ENCODE measurements at regions of chr2 and their contacts with region 1.

Region 1: DNA sequence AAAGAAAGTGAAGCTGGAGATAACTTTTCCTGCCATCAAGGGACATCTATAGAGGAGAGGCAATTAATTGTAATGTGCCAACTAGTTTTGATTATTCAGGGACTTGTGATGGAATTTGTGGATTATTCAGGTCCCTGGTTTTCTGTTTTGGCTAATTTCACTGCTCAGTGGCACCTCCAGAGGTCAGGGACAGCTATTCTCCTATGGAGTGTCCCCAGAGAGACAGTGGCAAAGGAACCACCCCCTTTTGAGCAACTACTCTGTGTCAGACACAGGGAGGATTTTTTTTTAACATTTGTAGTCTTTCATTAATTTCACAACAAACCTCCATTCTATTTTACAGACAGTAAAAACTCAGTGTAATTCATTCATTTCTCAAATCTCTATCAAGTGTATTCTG is 206.0 kb upstream of the SPRED2 start:
- H3K4me3 ChIP-seq: no peak overlapping the region
- H3K27ac ChIP-seq: no peak overlapping the region
- H3K4me1 ChIP-seq: peaks cover 23% of the 10 kb centered on the region
- CTCF ChIP-seq: no peak

Region 2: DNA sequence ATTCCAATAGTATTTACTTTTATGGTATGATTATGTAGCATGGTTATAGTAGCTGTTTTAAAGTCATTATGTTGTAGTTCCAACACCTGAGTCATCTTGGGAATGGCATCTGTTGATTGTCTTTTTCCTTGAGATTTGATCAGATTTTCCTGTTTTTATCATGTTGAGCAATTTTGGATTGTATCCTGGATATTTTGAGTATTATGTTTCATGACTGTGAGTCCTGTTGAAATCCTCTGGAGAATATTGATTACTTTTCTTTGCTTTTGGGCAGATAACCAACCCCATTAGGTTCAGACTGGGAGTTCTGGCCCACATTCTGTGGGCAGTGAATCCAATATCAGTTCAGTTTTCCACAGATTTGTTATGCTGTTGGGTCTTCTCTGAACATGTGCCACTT is 42.8 kb before region 1 on chr2:
- CTCF ChIA-PET with region 1: no interaction called
- POLR2A ChIA-PET with region 1: no interaction called
- H3K4me3 ChIP-seq: no peak overlapping the region
- H3K27ac ChIP-seq: no peak overlapping the region
- H3K4me1 ChIP-seq: no peaks in the 10 kb centered on the region
- CTCF ChIP-seq: no peak

Region 3: DNA sequence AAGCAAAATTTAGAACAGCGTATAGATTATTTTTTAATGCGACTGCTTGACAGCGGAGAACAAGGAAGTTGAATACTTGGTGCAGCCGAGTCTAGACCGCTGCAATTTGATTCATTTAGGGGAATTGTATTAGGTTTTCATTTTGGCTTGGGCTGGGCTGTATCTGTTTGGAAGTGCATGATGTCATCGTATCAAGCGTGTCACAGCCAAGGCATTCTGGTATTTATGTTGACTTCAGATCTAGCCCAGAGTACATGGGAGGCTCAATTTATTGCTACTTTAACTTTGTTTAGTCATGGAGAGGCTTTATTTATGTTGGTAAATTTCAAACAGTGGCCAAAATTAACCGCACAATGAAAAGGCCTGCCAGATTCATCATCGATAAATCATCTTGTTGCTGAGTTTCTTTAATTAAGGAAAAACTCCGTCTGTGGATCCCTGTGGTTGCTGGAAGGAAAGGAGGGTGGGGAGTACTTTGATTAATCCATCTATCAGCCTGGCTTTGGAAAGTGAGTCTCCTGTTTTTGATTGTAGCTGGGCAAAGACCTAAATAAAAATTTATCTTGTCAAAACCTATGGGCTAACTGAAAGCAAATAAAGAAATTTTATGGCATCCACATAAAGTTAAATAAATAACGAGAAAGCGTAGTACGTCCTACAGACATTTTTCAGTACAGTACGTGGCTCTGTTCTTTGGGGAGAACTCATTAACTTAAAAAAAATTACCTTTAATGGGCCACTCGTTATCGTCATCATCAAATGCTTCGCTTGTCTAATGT is 24.4 kb after region 1 on chr2:
- CTCF ChIA-PET with region 1: interaction called, 17 read pairs
- POLR2A ChIA-PET with region 1: no interaction called
- H3K4me3 ChIP-seq: peak overlapping the region; percentile 23
- H3K27ac ChIP-seq: peak overlapping the region; percentile 58
- H3K4me1 ChIP-seq: peaks cover 13% of the 10 kb centered on the region
- CTCF ChIP-seq: no peak

Region 4: GRCh38 chr2:65710779-65711295 is 72.4 kb after region 1 on chr2:
- CTCF ChIA-PET with region 1: interaction called, 24 read pairs
- POLR2A ChIA-PET with region 1: no interaction called
- H3K4me3 ChIP-seq: no peak overlapping the region
- H3K27ac ChIP-seq: no peak overlapping the region
- H3K4me1 ChIP-seq: no peaks in the 10 kb centered on the region; the same call in 1 of the 2 replicates
- CTCF ChIP-seq: 0 out of 2 replicates have a peak, but pooled peaks have one; percentile 19

Region 5: GRCh38 chr2:65722028-65722778 is 83.8 kb after region 1 on chr2:
- CTCF ChIA-PET with region 1: interaction called, 10 read pairs
- POLR2A ChIA-PET with region 1: no interaction called
- H3K4me3 ChIP-seq: no peak overlapping the region
- H3K27ac ChIP-seq: no peak overlapping the region
- H3K4me1 ChIP-seq: no peaks in the 10 kb centered on the region
- CTCF ChIP-seq: peak; percentile 66

Measured in HEK293 (cell line).